AG04449 (cell line): ENCODE measurements at regions of chr15 and their contacts with region 1.

Region 1: DNA sequence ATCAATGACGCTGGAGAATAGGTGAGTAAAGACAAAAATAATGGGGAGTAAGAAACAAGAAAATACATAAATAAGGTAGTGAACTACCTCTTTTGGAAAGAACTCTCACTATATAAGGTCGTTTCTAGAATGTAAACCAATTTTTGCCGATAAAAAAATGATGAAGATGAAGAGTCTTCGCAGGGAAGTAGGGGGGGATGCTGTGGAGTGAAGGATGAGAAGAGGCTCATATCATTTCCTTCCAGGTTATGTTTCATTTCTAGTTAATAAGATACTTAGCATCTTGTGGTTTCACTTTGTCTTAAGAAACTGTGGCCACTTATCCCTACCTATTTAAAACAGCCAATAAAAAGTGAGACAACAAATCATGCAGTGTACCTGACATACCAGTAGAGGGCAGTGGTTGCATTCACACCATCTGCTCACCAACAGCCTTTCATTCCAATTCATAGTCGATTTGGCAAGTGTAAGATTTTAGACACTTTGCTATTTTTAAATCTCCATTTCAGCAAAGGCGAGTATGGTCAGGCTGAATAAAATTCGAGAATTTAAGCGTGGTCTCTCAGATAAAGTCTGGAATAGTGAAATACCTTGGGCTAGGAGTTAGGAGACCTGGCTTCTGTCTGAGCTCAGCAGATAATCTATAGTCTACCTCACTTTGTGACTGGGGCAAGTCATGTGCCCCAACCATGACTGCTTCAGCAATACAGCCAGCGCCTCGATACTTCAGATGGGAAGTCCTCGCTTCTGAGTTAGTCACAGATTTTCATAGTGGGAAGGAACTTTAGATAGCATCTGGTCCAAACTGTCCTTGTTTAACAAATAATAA is 28.9 kb upstream of the ICE2 start:
- DNase-seq: peak; percentile 24
- H3K4me3 ChIP-seq: no peak overlapping the region
- CTCF ChIP-seq: peak; percentile 78

Region 2: DNA sequence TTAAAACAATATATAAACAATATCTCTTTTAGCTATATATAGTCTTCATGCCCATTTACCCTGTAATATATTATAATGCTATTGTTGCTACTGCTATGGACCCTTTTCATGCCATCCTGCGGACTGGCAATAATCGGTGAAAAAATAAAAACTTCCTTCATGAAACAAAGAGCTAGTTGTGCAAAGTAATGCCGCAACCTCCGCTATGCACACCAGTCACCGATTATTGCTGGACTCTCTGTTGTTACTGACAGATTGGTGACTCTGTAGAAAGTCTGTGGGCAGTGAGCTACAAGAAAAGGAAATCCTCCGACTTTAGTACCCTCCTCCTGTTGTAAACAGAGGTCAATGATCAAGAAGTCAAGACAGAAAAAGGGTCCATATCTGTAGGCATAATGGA is 11.0 kb before region 1 on chr15:
- CTCF ChIA-PET with region 1: interaction called, 54 read pairs
- POLR2A ChIA-PET with region 1: no interaction called
- DNase-seq: no peak
- H3K4me3 ChIP-seq: no peak overlapping the region
- CTCF ChIP-seq: no peak

Region 3: GRCh38 chr15:60526127-60526625 is 18.4 kb after region 1 on chr15:
- CTCF ChIA-PET with region 1: interaction called, 125 read pairs
- POLR2A ChIA-PET with region 1: no interaction called
- DNase-seq: no peak
- H3K4me3 ChIP-seq: no peak overlapping the region
- CTCF ChIP-seq: no peak

Region 4: GRCh38 chr15:60682115-60682514 is 174.3 kb after region 1 on chr15:
- CTCF ChIA-PET with region 1: no interaction called
- POLR2A ChIA-PET with region 1: no interaction called
- DNase-seq: peak; percentile 37
- H3K4me3 ChIP-seq: no peak overlapping the region
- CTCF ChIP-seq: no peak

Region 5: GRCh38 chr15:60787837-60788691 is 280.3 kb after region 1 on chr15:
- CTCF ChIA-PET with region 1: no interaction called
- POLR2A ChIA-PET with region 1: no interaction called
- DNase-seq: no peak
- H3K4me3 ChIP-seq: no peak overlapping the region
- CTCF ChIP-seq: peak; percentile 30